Right lobe of liver (tissue), 6 donors: ENCODE measurements at regions of chr5 and their contacts with region 1.

Region 1: DNA sequence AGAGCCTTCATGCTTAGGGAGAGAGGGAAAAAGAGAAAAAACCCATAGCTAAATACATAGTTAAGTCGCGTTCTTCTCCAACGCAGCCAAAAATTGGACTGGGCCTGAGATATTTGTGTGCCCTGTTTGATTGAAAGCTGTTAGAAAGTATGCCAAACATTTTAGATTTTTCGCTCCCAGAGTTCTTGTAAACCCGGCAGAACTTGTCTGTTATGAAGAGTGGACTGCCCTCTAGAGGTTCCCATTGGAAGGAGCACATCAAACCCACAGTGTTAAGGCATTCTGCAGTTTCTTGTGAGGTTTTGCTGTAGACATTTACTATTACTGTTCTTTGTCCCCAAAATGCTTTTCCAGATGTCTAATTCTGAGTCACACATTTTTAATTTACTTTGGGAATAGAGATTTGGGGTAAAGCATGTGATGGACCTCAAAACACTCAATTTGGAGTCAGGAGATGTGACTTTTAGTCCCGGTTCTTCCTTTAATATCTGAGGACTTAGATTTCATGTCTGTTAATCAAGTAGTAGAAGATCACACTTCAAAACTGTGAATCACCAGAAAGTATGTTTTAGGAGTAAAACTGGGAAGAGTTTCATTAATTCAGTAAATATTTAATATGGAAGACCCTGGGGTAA is 96.6 kb downstream of the PCSK1 start:
- DNase-seq: peak in 1 of 3 donors; percentile 81
- ATAC-seq: peak; percentile 59 to 74 (median 62)
- H3K4me3 ChIP-seq: no peak overlapping the region
- H3K27ac ChIP-seq: peak overlapping the region; percentile 26 to 88 (median 71)
- H3K4me1 ChIP-seq: peaks cover 0 to 57% (median 23%) of the 10 kb centered on the region in 4 donors
- H3K27me3 ChIP-seq: no peaks in the 10 kb centered on the region
- CTCF ChIP-seq: peak; percentile 89 to 93 (median 92)
- POLR2A ChIP-seq: no peak

Region 2: GRCh38 chr5:95883613-95884325 is 452.7 kb before region 1 on chr5:
- intact Hi-C with region 1: loop called in 1 of 2 experiments (anchors 10 kb)
- DNase-seq: no peak
- ATAC-seq: peak in 2 of 4 donors; percentile 3
- H3K4me3 ChIP-seq: no peak overlapping the region
- H3K27ac ChIP-seq: no peak overlapping the region
- H3K4me1 ChIP-seq: peaks cover 0 to 31% (median 8%) of the 10 kb centered on the region in 4 donors
- H3K27me3 ChIP-seq: no peaks in the 10 kb centered on the region
- CTCF ChIP-seq: no peak
- POLR2A ChIP-seq: no peak

Region 3: DNA sequence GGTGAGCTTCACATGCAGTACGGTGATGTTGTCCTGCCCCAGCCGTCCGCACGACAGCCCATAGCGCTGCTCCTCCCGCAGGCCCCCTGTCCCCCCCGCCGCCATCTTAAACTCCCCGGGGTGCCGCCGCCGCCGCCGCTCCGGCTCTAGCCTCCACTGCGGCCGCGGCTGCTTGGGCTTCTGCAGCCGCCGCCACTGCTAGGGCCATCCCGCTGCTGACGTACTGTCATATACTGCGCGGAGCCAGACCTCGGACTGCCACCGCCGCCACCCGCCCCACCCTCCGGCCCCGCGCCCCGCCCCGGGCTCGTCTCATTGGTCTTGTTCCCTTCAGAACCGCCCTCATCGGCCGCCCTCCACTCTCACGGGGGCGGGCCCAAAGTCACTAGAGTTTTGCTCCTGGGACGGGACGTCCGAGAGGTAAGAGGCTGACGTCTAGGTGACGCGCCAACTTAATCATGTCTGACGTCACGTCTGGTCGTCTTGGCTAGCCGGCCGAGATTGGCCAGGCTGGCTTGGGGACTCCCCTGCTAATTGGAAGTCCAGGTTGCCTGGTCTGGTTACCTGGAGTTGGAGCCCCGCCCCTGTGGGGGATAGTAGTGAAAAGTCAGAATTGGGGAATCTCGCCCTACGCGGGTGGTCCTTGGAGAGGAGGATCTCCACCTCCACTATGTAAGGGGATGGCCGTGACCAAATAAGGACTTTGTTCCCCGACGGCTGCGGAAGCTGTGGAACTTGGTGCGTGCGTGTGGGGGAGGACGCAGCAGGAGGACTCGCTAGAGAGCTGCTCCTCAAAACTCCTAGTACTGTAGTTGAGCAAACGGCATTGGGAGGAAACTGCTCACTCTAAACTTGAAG is 374.6 kb before region 1 on chr5 and contains the start of gene ELL2:
- intact Hi-C with region 1: loop called in 1 of 2 experiments (anchors 10 kb)
- DNase-seq: peak; percentile 99 to 100 (median 100)
- ATAC-seq: peak; percentile 75 to 89 (median 82)
- H3K4me3 ChIP-seq: peak within 1 kb of the TSS; percentile 71 to 78 (median 78)
- H3K27ac ChIP-seq: peak within 1 kb of the TSS; percentile 100
- H3K4me1 ChIP-seq: peaks cover 0 to 36% (median 10%) of the 10 kb centered on the region in 4 donors
- H3K27me3 ChIP-seq: no peaks in the 10 kb centered on the region
- CTCF ChIP-seq: no peak
- POLR2A ChIP-seq: peak; percentile 96
- total RNA-seq, gene ELL2: 74.3 to 96.4 (median 84.5) TPM

Region 4: GRCh38 chr5:96125231-96125891 is 211.1 kb before region 1 on chr5:
- intact Hi-C with region 1: loop called in 1 of 2 experiments (anchors 10 kb)
- DNase-seq: peak in 1 of 3 donors; percentile 65
- ATAC-seq: peak; percentile 57 to 77 (median 72)
- H3K4me3 ChIP-seq: peak overlapping the region in 2 of 3 donors; percentile 33 to 34
- H3K27ac ChIP-seq: peak overlapping the region; percentile 9 to 96 (median 88)
- H3K4me1 ChIP-seq: peaks cover 0 to 54% (median 13%) of the 10 kb centered on the region in 4 donors
- H3K27me3 ChIP-seq: no peaks in the 10 kb centered on the region
- CTCF ChIP-seq: no peak
- POLR2A ChIP-seq: peak; percentile 62

Region 5: DNA sequence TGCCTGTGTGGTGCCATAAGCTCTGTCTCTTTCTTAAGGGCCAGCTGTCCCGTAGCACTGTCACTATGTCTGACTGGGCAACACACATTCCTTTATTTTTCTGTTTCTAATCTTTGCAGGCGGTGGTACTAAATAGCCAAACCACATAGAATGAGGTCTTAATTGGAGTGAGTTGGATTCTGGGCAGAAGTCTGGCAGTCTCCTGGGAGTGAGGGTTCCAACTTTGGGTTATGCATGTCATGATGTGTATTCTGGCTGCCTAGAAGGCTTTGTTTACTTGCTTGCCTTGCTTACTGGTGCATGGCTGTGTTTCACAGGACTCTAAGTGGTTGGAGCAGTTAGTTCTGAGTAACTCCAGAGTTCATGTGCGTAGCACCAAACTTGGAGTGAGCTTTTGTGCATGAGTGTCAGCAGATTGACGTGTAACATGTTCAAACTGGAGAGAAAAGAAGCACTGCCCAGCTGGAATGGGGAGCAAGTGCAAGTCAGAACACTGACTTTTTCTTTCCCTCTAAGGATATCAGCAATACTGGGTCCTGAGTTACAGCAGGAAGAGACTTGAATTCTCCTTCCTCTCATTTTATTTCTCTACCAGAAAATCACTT is 89.3 kb before region 1 on chr5:
- intact Hi-C with region 1: loop called in 1 of 2 experiments (anchors 10 kb)
- DNase-seq: peak in 2 of 3 donors; percentile 51 to 83
- ATAC-seq: peak; percentile 75 to 85 (median 80)
- H3K4me3 ChIP-seq: no peak overlapping the region
- H3K27ac ChIP-seq: peak overlapping the region; percentile 41 to 91 (median 89)
- H3K4me1 ChIP-seq: peaks cover 0 to 44% (median 13%) of the 10 kb centered on the region in 4 donors
- H3K27me3 ChIP-seq: no peaks in the 10 kb centered on the region
- CTCF ChIP-seq: no peak
- POLR2A ChIP-seq: peak; percentile 30

Region 6: DNA sequence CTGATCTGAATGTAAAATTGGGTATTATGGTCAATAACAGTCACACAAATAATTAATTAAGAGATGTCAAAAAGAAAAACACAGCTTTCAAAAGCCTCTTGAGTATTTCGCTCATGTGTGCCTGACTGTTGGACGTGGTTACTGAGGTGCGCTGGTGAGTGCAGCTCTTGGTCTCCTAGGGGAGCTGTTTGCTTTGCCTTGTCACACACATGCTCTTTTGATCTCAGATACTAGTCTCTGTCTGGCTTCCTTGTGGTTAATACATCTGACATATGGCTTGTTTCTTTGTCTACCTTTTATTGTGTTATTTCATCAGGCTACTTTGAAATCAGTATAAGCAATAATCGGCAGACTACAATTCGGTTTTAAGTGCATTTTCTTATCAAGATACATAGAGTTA is 45.1 kb after region 1 on chr5:
- intact Hi-C with region 1: no loop called
- DNase-seq: no peak
- ATAC-seq: no peak
- H3K4me3 ChIP-seq: no peak overlapping the region
- H3K27ac ChIP-seq: no peak overlapping the region
- H3K4me1 ChIP-seq: no peaks in the 10 kb centered on the region
- H3K27me3 ChIP-seq: no peaks in the 10 kb centered on the region
- CTCF ChIP-seq: no peak
- POLR2A ChIP-seq: no peak

Region 7: DNA sequence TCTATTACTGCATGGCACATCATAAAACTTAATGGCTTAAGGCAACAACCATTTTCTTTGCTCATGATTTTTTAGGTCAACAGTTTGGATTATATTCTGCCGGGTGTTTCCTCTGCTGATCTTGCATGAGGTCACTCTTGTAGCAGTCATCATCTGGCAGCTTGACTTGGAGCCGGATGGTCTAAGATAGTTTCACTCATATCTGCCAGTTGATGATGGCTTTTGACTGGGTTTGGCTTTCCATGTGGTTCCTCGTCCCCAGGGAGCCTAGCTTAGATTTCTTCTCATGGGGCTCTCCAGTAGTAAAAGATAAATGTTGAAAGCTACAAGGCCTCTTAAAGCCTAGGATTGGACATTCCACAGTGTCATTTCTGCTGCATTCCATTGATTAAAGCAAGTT is 626.8 kb after region 1 on chr5:
- intact Hi-C with region 1: no loop called
- DNase-seq: no peak
- ATAC-seq: peak in 3 of 4 donors; percentile 37 to 87 (median 65)
- H3K4me3 ChIP-seq: no peak overlapping the region
- H3K27ac ChIP-seq: no peak overlapping the region
- H3K4me1 ChIP-seq: peaks cover 0 to 17% (median 0%) of the 10 kb centered on the region in 4 donors
- H3K27me3 ChIP-seq: no peaks in the 10 kb centered on the region
- CTCF ChIP-seq: no peak
- POLR2A ChIP-seq: no peak